ENCODE measurements at regions of chr20 and their contacts with region 1.

Region 1: DNA sequence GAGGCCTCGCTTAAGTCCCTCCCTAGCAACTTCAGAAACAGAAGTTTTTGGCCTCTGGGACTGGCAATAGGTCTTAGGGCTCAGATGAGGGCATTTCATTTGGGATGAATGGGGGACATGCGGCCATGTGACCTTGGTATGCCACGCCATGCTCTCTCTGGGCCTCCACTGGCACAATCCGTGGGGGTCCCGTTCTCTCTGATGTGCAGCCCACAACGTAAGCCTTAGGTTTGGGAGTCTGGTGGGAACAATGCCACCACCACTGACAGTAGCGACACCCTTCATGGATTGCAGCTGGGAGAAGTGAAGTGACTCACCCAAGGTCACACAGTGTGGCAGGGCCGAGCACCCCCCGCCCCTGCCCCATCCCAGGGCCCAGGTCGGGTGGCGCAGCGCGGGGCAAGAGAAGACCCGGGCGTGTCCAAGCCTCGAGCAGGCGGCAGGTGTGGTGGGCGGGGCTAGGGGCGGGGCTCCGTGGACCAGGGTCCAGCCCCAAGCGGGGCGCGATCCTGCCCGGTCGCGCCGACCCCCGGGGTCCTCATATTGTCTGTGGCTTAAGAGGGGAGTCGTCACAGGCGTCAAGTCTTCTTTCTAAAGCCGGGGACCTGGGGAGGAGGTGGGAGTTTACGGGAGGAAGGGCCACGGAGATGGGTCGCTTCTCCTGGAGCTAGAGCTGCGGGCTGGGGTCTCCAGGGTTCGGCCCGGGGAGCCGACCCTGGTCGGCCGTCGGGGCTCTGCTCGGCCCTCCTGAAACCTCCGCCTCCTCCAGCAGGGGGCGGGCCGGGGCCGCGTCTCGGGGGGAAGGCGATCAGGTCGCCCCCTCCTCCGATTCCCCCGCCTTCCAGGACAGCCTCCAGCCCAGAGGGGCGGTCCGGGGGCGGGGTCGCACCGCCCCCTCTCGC is 698 bp upstream of the CEBPB start:
- DNase-seq: peak; percentile 93
- ATAC-seq: peak; percentile 60
- H3K4me3 Mint-ChIP-seq: peak overlapping the region; percentile 30
- H3K27ac Mint-ChIP-seq: no peak overlapping the region
- H3K4me1 Mint-ChIP-seq: peaks cover 20% of the 10 kb centered on the region
- H3K27me3 Mint-ChIP-seq: peaks cover 9% of the 10 kb centered on the region

Region 2: GRCh38 chr20:50165684-50166554 is 24.0 kb before region 1 on chr20:
- CTCF ChIA-PET with region 1: interaction called, 10 read pairs
- POLR2A ChIA-PET with region 1: no interaction called
- intact Hi-C with region 1: no loop called
- DNase-seq: peak; percentile 95
- ATAC-seq: peak; percentile 100
- H3K4me3 Mint-ChIP-seq: peak overlapping the region; percentile 58
- H3K27ac Mint-ChIP-seq: peak overlapping the region; percentile 72
- H3K4me1 Mint-ChIP-seq: peaks cover 13% of the 10 kb centered on the region
- H3K27me3 Mint-ChIP-seq: peaks cover 5% of the 10 kb centered on the region

Region 3: DNA sequence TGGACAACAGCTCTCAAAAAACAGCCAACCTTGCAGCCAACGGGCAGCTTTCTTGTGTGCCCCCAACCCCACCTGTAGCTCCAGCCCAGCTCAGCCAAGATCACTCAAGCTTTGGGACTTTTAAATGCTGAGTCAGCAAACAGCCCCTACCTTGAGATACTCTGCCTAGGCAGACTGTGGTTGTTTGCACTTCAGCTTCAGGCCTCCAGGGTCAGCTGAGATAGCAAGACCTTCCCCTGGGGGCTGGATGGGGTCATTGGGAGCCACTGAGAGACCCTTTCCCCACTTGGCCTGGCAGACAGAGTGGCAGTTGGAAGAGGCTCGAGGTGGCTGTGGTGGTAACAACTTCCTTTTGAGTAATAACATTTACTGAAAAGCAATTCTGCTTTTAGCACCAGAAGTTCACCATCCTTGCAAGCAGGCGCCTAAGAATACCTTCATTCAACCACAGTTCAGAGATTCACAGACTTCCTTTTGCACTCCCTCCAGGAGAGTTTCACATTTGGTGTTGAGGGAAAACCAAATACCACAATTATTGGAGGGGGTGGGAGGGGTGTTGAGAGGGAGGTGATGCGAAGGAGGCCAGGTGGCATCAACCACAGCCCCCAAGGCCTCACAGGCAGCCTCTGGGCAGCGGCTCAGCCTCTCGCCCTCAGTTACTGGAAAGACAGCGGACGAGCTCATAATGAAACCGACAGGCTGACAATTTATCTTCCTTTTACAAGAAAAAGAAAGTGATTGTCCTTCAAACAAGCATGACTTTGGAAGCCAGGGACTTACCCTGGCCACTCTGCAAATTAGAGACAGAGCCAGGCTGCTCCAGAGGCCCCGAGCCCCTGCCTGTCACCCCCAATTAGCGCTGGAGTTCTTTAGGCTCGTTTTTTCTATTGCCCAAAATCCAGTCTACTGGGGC is 148.8 kb after region 1 on chr20:
- CTCF ChIA-PET with region 1: no interaction called
- POLR2A ChIA-PET with region 1: no interaction called
- intact Hi-C with region 1: loop called (anchors 1 to 2 kb)
- DNase-seq: peak; percentile 92
- ATAC-seq: peak; percentile 74
- H3K4me3 Mint-ChIP-seq: peak overlapping the region; percentile 55
- H3K27ac Mint-ChIP-seq: peak overlapping the region; percentile 97
- H3K4me1 Mint-ChIP-seq: peaks cover 61% of the 10 kb centered on the region
- H3K27me3 Mint-ChIP-seq: no peaks in the 10 kb centered on the region

Region 4: GRCh38 chr20:50460460-50461267 is 270.7 kb after region 1 on chr20:
- CTCF ChIA-PET with region 1: interaction called, 158 read pairs
- POLR2A ChIA-PET with region 1: interaction called, 3 read pairs
- intact Hi-C with region 1: loop called (anchors 1 kb)
- DNase-seq: peak; percentile 91
- ATAC-seq: peak; percentile 90
- H3K4me3 Mint-ChIP-seq: no peak overlapping the region
- H3K27ac Mint-ChIP-seq: no peak overlapping the region
- H3K4me1 Mint-ChIP-seq: peaks cover 8% of the 10 kb centered on the region
- H3K27me3 Mint-ChIP-seq: peaks cover 6% of the 10 kb centered on the region

Region 5: GRCh38 chr20:50575847-50576720 is 386.2 kb after region 1 on chr20:
- CTCF ChIA-PET with region 1: interaction called, 5 read pairs
- POLR2A ChIA-PET with region 1: no interaction called
- intact Hi-C with region 1: loop called (anchors 1 to 5 kb)
- DNase-seq: peak; percentile 83
- ATAC-seq: peak; percentile 89
- H3K4me3 Mint-ChIP-seq: no peak overlapping the region
- H3K27ac Mint-ChIP-seq: peak overlapping the region; percentile 16
- H3K4me1 Mint-ChIP-seq: peaks cover 44% of the 10 kb centered on the region
- H3K27me3 Mint-ChIP-seq: no peaks in the 10 kb centered on the region

Region 6: GRCh38 chr20:50929299-50930138 is 739.6 kb after region 1 on chr20:
- CTCF ChIA-PET with region 1: no interaction called
- POLR2A ChIA-PET with region 1: no interaction called
- intact Hi-C with region 1: loop called in 1 of 2 experiments (anchors 5 kb)
- DNase-seq: peak; percentile 98
- ATAC-seq: peak; percentile 80
- H3K4me3 Mint-ChIP-seq: peak overlapping the region; percentile 92
- H3K27ac Mint-ChIP-seq: peak overlapping the region; percentile 95
- H3K4me1 Mint-ChIP-seq: peaks cover 55% of the 10 kb centered on the region
- H3K27me3 Mint-ChIP-seq: no peaks in the 10 kb centered on the region